Astrocyte of the cerebellum (primary cell): ENCODE measurements at regions of chr6 and their contacts with region 1.

Region 1: GRCh38 chr6:43593938-43594337 is 18.0 kb downstream of the POLH start:
- DNase-seq: no peak
- H3K4me3 ChIP-seq: no peak overlapping the region
- CTCF ChIP-seq: no peak

Region 2: DNA sequence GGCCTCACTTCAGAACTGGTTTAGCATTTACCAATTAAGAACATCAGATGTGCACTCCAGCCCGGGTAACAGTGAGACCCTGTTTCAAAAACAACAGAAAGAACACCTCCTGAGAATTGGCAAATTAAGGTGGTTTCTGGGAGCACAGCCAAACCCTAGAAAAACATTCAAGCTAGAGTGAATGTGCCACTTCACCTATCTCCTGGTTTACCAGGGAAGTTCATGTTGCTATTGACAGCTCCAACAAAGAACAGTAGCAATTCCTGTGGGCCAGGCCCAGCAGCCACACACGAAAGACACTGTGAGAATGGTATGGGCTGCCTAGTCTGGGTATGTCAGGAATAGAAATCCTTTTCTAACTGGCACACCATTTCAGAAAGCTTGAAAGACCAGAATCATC is 72.1 kb before region 1 on chr6:
- in situ Hi-C with region 1: loop called (anchors 5 kb)
- DNase-seq: no peak
- H3K4me3 ChIP-seq: no peak overlapping the region
- CTCF ChIP-seq: no peak

Region 3: GRCh38 chr6:43644931-43645612 is 51.1 kb after region 1 on chr6 and contains the start of gene RSPH9:
- in situ Hi-C with region 1: no loop called
- DNase-seq: no peak
- H3K4me3 ChIP-seq: peak within 1 kb of the TSS; percentile 45
- CTCF ChIP-seq: no peak